Panc1 (cell line): ENCODE measurements at regions of chr6 and their contacts with region 1.

Region 1: GRCh38 chr6:159104163-159104925 is 59.6 kb upstream of the TAGAP start:
- DNase-seq: peak; percentile 48
- ATAC-seq: peak; percentile 94
- H3K4me3 ChIP-seq: no peak overlapping the region
- H3K27ac ChIP-seq: no peak overlapping the region
- H3K4me1 ChIP-seq: 0 out of 2 replicates have a peak, but pooled peaks cover 4% of the 10 kb centered on the region
- H3K27me3 ChIP-seq: 0 out of 2 replicates have a peak, but pooled peaks cover 2% of the 10 kb centered on the region
- CTCF ChIP-seq: peak; percentile 96

Region 2: DNA sequence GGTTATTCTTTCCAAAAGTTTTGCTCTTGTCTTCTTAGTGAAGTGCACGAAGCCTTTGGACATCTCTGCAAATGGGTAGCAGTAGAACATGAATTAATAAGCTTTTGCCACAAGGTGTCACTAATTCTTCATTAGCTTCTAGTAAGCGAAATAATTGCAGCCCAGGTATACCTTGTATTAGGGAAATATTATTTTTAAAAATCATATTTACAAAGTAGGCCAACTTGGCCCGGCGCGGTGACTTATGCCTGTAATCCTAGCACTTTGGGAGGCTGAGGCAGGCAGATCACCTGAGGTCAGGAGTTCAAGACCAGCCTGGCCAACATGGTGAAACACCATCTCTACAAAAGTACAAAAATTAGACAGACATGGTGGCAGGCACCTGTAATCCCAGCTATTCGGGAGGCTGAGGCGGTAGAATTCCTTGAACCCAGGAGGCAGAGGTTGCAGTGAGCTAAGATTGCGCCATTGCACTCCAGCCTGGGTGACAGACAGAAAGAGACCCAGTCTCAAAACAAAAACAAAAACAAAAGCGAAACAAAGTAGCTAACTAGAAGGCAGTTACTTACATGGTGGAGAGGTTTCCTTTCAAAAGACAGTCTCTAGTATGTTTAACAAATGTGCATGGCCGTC is 95.6 kb before region 1 on chr6:
- CTCF ChIA-PET with region 1: interaction called, 11 read pairs
- POLR2A ChIA-PET with region 1: no interaction called
- in situ Hi-C with region 1: no loop called
- intact Hi-C with region 1: loop called (anchors 5 kb)
- DNase-seq: peak; percentile 28
- ATAC-seq: peak; percentile 73
- H3K4me3 ChIP-seq: no peak overlapping the region
- H3K27ac ChIP-seq: no peak overlapping the region
- H3K4me1 ChIP-seq: no peaks in the 10 kb centered on the region
- H3K27me3 ChIP-seq: no peaks in the 10 kb centered on the region
- CTCF ChIP-seq: peak; percentile 69

Region 3: DNA sequence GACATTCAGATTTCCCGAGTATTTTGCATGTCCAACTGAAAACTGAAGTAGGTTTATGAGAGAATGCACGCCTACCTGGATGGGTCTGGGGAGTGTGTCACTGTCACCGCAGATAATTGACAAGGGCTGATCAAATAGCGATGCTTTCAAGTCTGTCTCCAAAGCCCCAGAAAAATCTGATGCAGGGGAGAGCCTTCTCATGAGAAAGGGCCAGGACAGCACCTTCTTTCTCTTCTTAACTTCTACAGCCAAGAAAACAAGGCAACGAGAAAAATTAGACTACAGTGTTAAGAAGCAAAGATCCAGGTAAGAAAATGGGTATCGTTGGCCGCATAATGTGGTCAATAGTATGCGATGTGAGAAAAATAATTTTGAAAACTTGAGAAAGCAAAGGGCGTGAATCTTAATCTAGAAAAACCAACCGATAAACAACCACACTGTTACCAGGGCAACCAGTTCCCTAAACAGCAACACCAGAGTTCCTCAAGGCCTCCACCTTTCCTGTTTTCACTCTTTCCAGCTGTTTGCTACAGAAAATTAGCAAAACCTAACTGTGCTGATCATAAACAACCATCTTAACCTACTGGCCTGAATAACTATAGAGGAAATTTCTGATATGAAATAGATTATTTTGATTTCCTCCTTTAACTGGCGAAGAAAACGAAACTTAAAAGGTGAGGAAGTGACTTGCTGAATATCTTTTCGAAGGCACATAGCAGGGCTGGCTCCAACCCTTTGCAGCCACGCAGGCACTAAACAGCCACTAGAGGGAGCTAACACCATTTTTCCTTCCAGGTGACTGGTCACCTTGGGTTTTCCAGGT is 62.1 kb before region 1 on chr6:
- CTCF ChIA-PET with region 1: interaction called, 5 read pairs
- POLR2A ChIA-PET with region 1: interaction called, 3 read pairs
- in situ Hi-C with region 1: no loop called
- intact Hi-C with region 1: loop called (anchors 2 kb)
- DNase-seq: peak; percentile 54
- ATAC-seq: peak; percentile 93
- H3K4me3 ChIP-seq: no peak overlapping the region
- H3K27ac ChIP-seq: no peak overlapping the region
- H3K4me1 ChIP-seq: no peaks in the 10 kb centered on the region
- H3K27me3 ChIP-seq: peaks cover 24% of the 10 kb centered on the region
- CTCF ChIP-seq: peak; percentile 97

Region 4: GRCh38 chr6:159842035-159842434 is 737.7 kb after region 1 on chr6:
- CTCF ChIA-PET with region 1: no interaction called
- POLR2A ChIA-PET with region 1: no interaction called
- in situ Hi-C with region 1: no loop called
- intact Hi-C with region 1: no loop called
- DNase-seq: no peak
- ATAC-seq: peak; percentile 72
- H3K4me3 ChIP-seq: no peak overlapping the region
- H3K27ac ChIP-seq: no peak overlapping the region
- H3K4me1 ChIP-seq: no peaks in the 10 kb centered on the region
- H3K27me3 ChIP-seq: no peaks in the 10 kb centered on the region
- CTCF ChIP-seq: peak; percentile 67